GM23248 (cell line): ENCODE measurements at regions of chr7 and their contacts with region 1.

Region 1: GRCh38 chr7:137898839-137899721 is 52.3 kb upstream of the DGKI start:
- DNase-seq: peak; percentile 85
- H3K4me3 ChIP-seq: no peak overlapping the region
- H3K27ac ChIP-seq: peak overlapping the region; percentile 3; the same call in 1 of the 2 replicates
- H3K4me1 ChIP-seq: no peaks in the 10 kb centered on the region; the same call in 1 of the 2 replicates
- H3K27me3 ChIP-seq: no peaks in the 10 kb centered on the region

Region 2: GRCh38 chr7:137652721-137653120 is 246.4 kb before region 1 on chr7:
- in situ Hi-C with region 1: loop called (anchors 5 kb)
- DNase-seq: peak; percentile 74
- H3K4me3 ChIP-seq: no peak overlapping the region
- H3K27ac ChIP-seq: no peak overlapping the region
- H3K4me1 ChIP-seq: peaks cover 32% of the 10 kb centered on the region
- H3K27me3 ChIP-seq: no peaks in the 10 kb centered on the region

Region 3: GRCh38 chr7:138195151-138195585 is 296.1 kb after region 1 on chr7:
- in situ Hi-C with region 1: no loop called
- DNase-seq: no peak
- H3K4me3 ChIP-seq: no peak overlapping the region
- H3K27ac ChIP-seq: no peak overlapping the region
- H3K4me1 ChIP-seq: no peaks in the 10 kb centered on the region
- H3K27me3 ChIP-seq: no peaks in the 10 kb centered on the region